Posterior vena cava (tissue), 2 donors: ENCODE measurements at regions of chr7 and their contacts with region 1.

Region 1: GRCh38 chr7:13800694-13801448 is 188.6 kb downstream of the ETV1 start:
- DNase-seq: no peak

Region 2: DNA sequence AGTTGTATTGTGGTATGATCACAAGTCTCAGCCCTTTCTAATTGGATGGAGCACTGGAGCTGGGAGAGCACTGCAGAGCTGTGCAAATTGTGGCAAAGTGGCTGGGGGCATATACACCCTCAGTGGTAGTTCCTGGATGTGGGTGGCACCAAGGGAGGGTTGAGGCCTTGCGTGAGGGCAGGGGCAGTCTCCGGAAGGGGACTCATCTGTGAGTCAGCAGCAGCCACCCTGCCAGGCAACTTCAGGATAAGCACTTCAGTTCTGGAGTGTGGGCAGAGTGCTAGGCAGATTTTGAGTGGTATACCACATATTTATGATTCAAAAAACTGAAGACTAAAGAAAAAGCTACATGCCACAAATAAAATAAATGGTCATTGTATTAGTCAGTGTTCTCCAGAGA is 21.9 kb before region 1 on chr7:
- intact Hi-C with region 1: loop called in 1 of 2 experiments (anchors 2 kb)
- DNase-seq: no peak

Region 3: DNA sequence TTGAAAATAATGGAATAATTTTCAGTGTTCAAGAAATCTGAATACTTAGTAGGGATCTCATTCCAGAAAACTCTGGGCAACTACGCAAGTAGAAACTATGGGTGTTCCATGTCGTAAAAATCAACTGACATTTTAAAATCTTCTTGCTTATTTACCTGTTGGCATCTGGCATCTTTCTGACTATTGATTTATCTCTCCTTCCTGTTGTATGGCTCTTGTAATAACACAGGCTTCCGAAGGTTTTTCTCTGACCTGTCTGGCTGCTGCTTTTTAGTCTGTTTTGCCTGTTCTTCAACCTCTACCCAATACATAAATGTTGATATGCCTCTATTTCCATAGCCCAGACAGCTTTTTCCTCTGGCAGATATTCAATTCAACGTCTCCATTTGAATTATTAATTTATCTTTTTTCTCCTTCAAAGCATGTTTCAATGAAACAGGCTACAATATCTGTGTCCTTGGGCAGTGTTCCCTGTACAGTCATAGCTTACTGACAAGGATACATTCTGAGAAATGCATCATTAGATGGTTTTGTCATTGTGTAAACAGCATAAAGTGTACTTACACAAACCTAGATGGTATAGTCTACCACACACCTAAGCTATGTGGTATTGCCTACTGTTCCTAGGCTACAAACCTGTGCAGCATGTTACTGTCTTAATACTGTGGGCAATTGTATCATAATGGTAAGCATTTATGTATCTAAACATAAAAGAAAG is 294.5 kb after region 1 on chr7:
- intact Hi-C with region 1: no loop called
- DNase-seq: no peak